ENCODE measurements at regions of chr4 and their contacts with region 1.

Region 1: GRCh38 chr4:81040012-81040659 is 9.6 kb downstream of the BMP3 start:
- DNase-seq: peak; percentile 15
- H3K4me3 ChIP-seq: peak overlapping the region in 1 of 2 experiments; percentile 27; a peak in 1 of 4 replicates
- H3K27ac ChIP-seq: no peak overlapping the region
- H3K4me1 ChIP-seq: no peaks in the 10 kb centered on the region; a peak in 1 of 4 replicates
- H3K27me3 ChIP-seq: 0 out of 2 replicates have a peak, but pooled peaks cover 8% of the 10 kb centered on the region
- CTCF ChIP-seq: peak; percentile 90
- EP300 ChIP-seq: no peak
- RAD21 ChIP-seq: peak; percentile 79

Region 2: GRCh38 chr4:80365928-80366327 is 674.2 kb before region 1 on chr4:
- CTCF ChIA-PET with region 1: interaction called, 21 read pairs
- POLR2A ChIA-PET with region 1: no interaction called
- DNase-seq: peak; percentile 34
- H3K4me3 ChIP-seq: no peak overlapping the region
- H3K27ac ChIP-seq: no peak overlapping the region
- H3K4me1 ChIP-seq: no peaks in the 10 kb centered on the region
- H3K27me3 ChIP-seq: no peaks in the 10 kb centered on the region
- CTCF ChIP-seq: peak; percentile 86
- EP300 ChIP-seq: peak in 1 of 2 experiments; percentile 26; a peak in 1 of 4 replicates
- RAD21 ChIP-seq: peak; percentile 76

Region 3: DNA sequence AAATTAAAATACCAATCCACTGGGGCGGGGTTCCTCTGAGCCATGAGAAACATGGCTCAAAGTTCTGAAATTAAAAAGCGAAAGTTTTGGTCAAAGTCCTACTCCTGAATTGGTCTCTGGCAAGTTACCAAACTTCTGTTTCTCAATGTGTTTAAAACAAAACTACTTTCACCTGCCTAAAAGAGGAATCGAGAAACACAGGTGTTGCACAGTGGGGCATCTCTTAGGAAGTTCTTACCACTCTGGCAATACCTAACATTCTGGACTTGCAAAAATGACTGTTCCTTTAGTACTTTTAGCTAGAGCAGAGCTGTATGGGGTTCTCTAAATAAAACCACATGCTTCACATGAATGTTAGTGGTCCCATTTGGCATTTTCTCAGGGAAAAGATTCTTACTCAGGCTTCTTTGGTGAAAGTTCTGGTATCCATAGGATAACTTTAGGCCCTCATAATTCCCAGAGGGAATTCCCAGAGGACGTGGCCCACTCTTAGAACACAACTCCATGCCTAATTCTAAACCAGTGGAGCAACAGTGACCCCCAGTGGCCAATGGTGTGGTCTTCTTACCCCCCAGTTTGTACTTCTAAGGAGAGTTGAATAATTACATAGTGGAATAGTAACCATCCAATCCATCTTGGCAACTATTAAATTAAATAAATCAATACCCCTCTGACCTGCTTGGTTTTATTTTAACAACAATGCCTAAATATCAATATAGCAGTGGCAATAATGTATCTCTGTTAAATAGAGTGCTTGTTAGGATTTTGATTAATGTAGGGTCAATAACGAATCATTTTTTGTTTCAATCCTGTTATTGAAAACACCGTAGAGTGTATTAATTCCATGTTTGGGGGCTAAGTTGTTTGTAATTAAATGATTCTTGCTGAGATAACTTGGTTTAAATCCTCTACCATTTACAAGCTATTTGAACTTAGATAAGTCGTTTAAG is 12.3 kb after region 1 on chr4:
- CTCF ChIA-PET with region 1: interaction called, 26 read pairs
- POLR2A ChIA-PET with region 1: no interaction called
- DNase-seq: peak; percentile 20
- H3K4me3 ChIP-seq: no peak overlapping the region; a peak in 1 of 4 replicates
- H3K27ac ChIP-seq: no peak overlapping the region
- H3K4me1 ChIP-seq: no peaks in the 10 kb centered on the region
- H3K27me3 ChIP-seq: no peaks in the 10 kb centered on the region; the same call in 1 of the 2 replicates
- CTCF ChIP-seq: peak; percentile 87
- EP300 ChIP-seq: no peak
- RAD21 ChIP-seq: peak; percentile 70

Region 4: GRCh38 chr4:81116566-81116965 is 76.4 kb after region 1 on chr4:
- CTCF ChIA-PET with region 1: no interaction called
- POLR2A ChIA-PET with region 1: no interaction called
- DNase-seq: no peak
- H3K4me3 ChIP-seq: no peak overlapping the region
- H3K27ac ChIP-seq: no peak overlapping the region
- H3K4me1 ChIP-seq: no peaks in the 10 kb centered on the region
- H3K27me3 ChIP-seq: peaks cover 4% of the 10 kb centered on the region; the same call in 1 of the 2 replicates
- CTCF ChIP-seq: no peak
- EP300 ChIP-seq: no peak
- RAD21 ChIP-seq: no peak

Measured in SK-N-SH (cell line).